Mammary epithelial cell (primary cell): ENCODE measurements at regions of chr18 and their contacts with region 1.

Region 1: DNA sequence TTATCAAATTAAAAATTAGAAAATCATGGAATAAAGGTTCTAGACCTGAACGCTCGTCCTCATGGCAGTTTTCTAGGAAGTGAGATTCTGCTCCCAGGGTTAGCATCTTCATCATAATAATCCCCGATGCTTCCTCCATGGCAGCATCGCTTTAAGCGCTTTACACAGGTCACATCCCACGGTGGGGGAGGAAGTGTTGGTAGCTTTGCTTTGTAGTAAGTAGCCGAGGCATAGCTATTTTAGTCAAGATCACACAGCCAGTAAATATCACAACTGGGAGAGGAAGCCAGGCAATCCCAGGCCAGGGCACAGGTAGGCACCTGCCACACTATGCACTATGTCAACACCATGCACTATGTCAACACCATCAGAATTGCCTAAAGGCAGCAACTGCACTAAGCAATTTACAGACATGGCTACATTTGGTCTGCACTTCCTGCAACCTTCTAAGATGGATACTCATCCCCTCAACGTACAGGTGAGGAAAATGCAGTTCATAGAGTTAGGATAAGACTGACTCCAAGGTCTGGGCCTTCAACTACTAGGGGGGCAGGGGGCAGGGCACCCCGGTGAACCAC is 205.5 kb downstream of the FBXO15 start:
- DNase-seq: no peak
- H3K4me3 ChIP-seq: no peak overlapping the region
- H3K27ac ChIP-seq: no peak overlapping the region
- H3K4me1 ChIP-seq: no peaks in the 10 kb centered on the region
- H3K27me3 ChIP-seq: no peaks in the 10 kb centered on the region
- CTCF ChIP-seq: no peak

Region 2: DNA sequence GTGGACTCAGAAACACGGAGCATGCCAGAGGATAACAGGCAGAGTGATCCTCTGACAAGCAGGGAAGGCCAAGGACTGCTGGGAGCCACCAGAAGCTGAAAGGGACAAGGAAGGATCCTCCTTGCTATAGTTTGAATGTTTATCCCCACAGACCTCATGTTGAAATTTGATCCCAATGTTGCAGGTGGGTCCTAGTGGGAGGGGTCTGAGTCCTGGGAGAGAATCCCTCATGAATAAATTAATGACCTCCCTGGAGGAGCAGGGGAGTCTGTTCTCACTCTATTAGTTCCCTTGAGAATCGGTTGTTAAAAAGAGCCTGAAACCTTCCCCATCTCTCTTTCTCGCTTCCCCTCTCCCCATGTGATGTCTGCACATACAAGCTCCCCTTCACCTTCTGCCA is 81.0 kb after region 1 on chr18:
- CTCF ChIA-PET with region 1: no interaction called
- dilution Hi-C with region 1: loop called (anchors 5 kb)
- in situ Hi-C with region 1: no loop called
- intact Hi-C with region 1: no loop called
- DNase-seq: no peak
- H3K4me3 ChIP-seq: no peak overlapping the region
- H3K27ac ChIP-seq: no peak overlapping the region
- H3K4me1 ChIP-seq: no peaks in the 10 kb centered on the region
- H3K27me3 ChIP-seq: peaks cover 2% of the 10 kb centered on the region
- CTCF ChIP-seq: no peak

Region 3: GRCh38 chr18:74081966-74082741 is 140.0 kb after region 1 on chr18:
- CTCF ChIA-PET with region 1: no interaction called
- dilution Hi-C with region 1: no loop called
- in situ Hi-C with region 1: no loop called
- intact Hi-C with region 1: no loop called
- DNase-seq: peak; percentile 49
- H3K4me3 ChIP-seq: no peak overlapping the region
- H3K27ac ChIP-seq: no peak overlapping the region
- H3K4me1 ChIP-seq: no peaks in the 10 kb centered on the region
- H3K27me3 ChIP-seq: no peaks in the 10 kb centered on the region
- CTCF ChIP-seq: peak; percentile 59 to 82